ENCODE measurements at regions of chr20 and their contacts with region 1.

Region 1: GRCh38 chr20:6767536-6768227 is at the start of gene BMP2:
- DNase-seq: no peak
- ATAC-seq: peak; percentile 89
- H3K4me3 ChIP-seq: peak within 1 kb of the TSS; percentile 48 to 65 (median 53)
- H3K27ac ChIP-seq: no peak within 1 kb of the TSS
- H3K4me1 ChIP-seq: no peaks in the 10 kb centered on the region
- H3K27me3 ChIP-seq: peaks cover 11 to 30% of the 10 kb centered on the region in 2 experiments; a peak in 4 of 5 replicates
- CTCF ChIP-seq: peak; percentile 28; the same call in 1 of the 2 replicates
- EP300 ChIP-seq: no peak
- POLR2A ChIP-seq: no peak
- RAD21 ChIP-seq: no peak; the same call in 1 of the 2 replicates
- total RNA-seq, gene BMP2: 0.02 TPM in 1 of 2 replicates, not detected in the other

Region 2: DNA sequence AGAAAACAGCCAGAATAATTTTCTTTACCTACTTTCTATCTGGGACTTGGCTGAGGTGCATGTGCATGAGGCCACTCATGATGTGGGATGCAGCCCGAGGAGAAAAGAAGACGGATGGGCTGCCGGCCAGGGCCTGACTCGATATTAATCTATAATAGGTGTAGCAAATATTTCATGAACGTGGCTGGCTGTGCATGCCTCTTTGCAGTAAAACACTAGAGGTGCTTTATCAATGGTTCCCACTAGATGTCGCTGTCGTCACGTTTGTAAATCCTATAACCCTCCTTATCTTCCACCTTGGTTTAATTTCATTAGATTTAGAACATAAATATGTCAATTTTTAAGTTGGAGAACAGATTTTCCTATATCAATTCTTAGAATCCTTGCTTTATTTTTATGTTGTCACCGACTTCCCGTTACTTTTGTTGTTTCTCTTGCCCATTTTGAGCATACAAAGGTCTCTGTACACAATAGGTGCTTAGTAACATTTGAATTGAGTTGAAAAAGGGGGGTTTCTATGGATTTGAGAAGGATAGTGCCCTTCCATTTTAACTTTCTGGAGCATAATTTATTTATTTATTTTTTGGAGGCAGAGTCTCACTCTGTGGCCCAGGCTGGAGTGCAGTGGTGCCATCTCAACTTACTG is 625.2 kb before region 1 on chr20:
- CTCF ChIA-PET with region 1: interaction called, 3 read pairs
- POLR2A ChIA-PET with region 1: no interaction called
- in situ Hi-C with region 1: no loop called
- intact Hi-C with region 1: loop called (anchors 2 kb)
- DNase-seq: peak; percentile 70
- ATAC-seq: peak; percentile 89
- H3K4me3 ChIP-seq: no peak overlapping the region
- H3K27ac ChIP-seq: no peak overlapping the region
- H3K4me1 ChIP-seq: no peaks in the 10 kb centered on the region
- H3K27me3 ChIP-seq: no peaks in the 10 kb centered on the region
- CTCF ChIP-seq: peak; percentile 87
- EP300 ChIP-seq: no peak
- POLR2A ChIP-seq: no peak
- RAD21 ChIP-seq: no peak; the same call in 1 of the 2 replicates

Region 3: DNA sequence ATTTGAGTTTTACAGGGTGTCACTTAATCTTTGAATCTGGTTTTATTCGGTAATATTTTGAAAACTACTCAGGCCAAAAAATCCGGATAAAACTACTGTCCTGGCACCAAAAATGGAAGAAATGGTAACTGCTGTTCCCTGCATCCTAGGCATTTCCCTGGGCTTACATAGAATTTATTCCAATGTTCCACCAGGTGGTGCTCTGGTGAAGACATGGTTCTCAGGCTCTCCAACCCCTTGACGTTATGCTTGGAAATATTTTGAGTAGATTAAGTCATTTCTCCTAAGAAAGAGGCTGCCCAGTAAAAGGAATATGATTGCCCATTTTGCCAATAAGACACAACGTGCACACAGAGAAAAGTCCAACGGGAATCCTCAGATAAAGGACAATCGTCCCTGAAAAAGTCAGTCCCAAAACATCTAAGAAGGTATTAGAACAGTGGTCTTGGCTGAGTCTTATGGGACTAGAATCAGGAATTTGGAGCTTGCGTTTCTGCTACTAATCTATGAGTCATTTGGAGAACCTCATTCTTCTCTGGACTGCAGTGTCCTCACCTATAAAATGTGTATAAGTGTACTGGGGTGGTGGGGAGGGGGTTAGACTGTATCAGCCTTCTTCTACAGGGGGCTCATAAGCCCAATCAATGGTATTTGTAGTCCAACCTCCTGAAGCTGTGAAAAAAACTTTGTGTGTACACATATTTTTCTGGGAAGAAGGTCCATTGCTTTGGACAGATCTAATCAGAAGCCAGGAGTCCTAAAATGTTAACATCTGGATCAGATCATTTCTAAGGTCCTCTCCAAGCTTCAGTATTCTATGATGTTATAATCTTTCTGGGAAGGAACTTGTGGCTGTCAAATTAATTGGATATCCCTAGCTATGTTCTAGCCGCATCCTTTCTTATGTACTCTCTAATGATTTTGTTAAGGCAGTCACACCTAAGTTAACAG is 131.2 kb before region 1 on chr20:
- CTCF ChIA-PET with region 1: interaction called, 12 read pairs
- POLR2A ChIA-PET with region 1: no interaction called
- in situ Hi-C with region 1: no loop called
- intact Hi-C with region 1: loop called (anchors 1 kb)
- DNase-seq: peak; percentile 63
- ATAC-seq: peak; percentile 96
- H3K4me3 ChIP-seq: no peak overlapping the region
- H3K27ac ChIP-seq: no peak overlapping the region
- H3K4me1 ChIP-seq: no peaks in the 10 kb centered on the region
- H3K27me3 ChIP-seq: no peaks in the 10 kb centered on the region
- CTCF ChIP-seq: peak; percentile 80
- EP300 ChIP-seq: no peak
- POLR2A ChIP-seq: no peak
- RAD21 ChIP-seq: peak; percentile 57; the same call in 1 of the 2 replicates

Region 4: DNA sequence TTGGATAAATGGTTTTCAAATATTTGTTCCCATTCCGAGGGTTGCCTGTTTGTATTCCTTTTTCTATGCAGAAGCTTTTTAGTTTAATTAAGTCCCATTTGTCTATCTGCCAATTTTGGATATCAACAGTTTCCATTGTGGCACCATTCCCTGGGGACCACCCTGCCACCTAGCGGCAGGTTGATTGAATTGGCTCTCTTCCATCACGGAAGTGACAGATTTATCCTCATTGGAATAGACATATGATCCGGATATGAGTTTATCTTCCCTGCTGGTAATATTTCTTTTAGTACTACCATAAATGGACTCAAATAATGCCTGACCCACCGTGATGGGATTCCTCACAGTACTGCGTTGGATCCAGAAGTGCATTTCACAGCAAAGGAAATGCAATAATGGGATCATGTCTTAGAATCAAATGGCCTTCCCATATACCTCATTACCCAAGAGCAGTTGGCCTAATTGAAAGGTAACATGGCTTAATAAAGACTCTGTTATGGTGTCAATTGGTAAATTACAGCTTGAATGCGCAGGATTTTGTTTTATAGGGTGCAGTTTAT is 326.8 kb after region 1 on chr20:
- CTCF ChIA-PET with region 1: no interaction called
- POLR2A ChIA-PET with region 1: no interaction called
- in situ Hi-C with region 1: no loop called
- intact Hi-C with region 1: loop called (anchors 1 kb)
- DNase-seq: peak; percentile 43
- ATAC-seq: peak; percentile 76
- H3K4me3 ChIP-seq: no peak overlapping the region
- H3K27ac ChIP-seq: no peak overlapping the region
- H3K4me1 ChIP-seq: no peaks in the 10 kb centered on the region
- H3K27me3 ChIP-seq: no peaks in the 10 kb centered on the region
- CTCF ChIP-seq: peak; percentile 79
- EP300 ChIP-seq: no peak
- POLR2A ChIP-seq: no peak
- RAD21 ChIP-seq: peak; percentile 37; the same call in 1 of the 2 replicates

Region 5: DNA sequence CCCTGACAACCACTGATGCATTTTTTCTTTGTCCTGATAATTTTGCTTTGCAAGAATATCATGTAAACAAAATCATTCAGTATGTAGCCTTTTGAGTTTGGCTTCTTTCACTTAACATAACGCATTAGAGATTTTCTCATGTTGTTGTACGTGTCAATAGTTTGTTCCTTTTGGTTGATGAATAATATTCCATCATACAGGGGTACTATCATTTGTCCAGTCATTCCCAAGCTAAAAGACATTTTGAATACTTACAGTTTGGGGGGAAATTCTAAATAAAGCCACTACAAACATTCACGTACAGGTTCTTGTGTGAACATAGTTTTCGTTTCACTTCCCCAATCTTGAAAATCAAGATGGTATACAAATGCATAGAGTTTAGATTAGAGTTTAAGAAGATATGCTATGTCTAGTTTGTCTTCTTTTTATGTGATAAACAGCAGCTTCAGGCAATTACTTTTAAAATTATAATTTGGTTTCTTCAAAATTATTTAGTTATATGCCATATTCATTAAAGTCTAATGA is 1167.4 kb after region 1 on chr20:
- CTCF ChIA-PET with region 1: no interaction called
- POLR2A ChIA-PET with region 1: no interaction called
- in situ Hi-C with region 1: no loop called
- intact Hi-C with region 1: loop called (anchors 10 kb)
- DNase-seq: no peak
- ATAC-seq: no peak
- H3K4me3 ChIP-seq: no peak overlapping the region
- H3K27ac ChIP-seq: no peak overlapping the region
- H3K4me1 ChIP-seq: peaks cover 14% of the 10 kb centered on the region
- H3K27me3 ChIP-seq: no peaks in the 10 kb centered on the region
- CTCF ChIP-seq: no peak
- EP300 ChIP-seq: no peak
- POLR2A ChIP-seq: no peak
- RAD21 ChIP-seq: no peak